Pancreas (tissue), 10 donors: ENCODE measurements at regions of chr7 and their contacts with region 1.

Region 1: DNA sequence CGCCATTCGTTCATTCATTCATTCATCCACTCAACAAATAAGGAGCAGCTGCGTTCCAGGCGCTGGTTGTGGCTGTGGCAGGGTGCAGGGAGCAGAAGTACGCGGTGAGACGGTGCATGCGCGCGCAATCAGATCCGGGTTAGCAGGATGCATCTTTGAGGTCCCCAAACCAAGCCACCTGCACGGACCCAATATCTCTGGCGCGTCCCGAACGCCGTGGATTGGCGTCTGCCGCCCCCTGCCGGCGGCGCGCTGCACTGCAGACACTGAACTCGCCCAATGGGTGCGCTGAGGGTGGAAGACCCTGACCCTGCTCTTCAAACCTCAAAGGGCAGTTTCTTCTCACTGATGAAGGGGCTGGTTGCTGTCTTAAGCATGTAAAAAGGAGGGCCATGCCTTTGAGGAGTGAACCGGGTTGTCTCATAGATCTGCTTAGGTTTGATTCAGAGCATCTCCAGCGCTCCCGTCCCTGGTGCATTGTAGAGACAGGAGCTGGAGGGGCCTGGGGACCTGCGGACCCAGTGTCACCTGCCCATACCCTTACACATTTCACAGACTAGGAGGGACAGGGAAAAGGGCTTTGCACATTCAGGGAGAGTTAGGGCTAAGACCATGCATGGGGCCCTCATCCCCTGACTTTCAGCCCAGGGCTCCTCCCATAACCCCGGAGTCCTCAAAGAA is 102.5 kb downstream of the RAMP3 start:
- DNase-seq: peak in 3 of 6 donors; percentile 40 to 88 (median 50)
- ATAC-seq: peak in 3 of 4 donors; percentile 72 to 86 (median 82)
- H3K4me3 ChIP-seq: no peak overlapping the region
- H3K27ac ChIP-seq: no peak overlapping the region
- H3K4me1 ChIP-seq: no peaks in the 10 kb centered on the region
- H3K27me3 ChIP-seq: no peaks in the 10 kb centered on the region
- CTCF ChIP-seq: peak; percentile 74 to 96 (median 86)

Region 2: DNA sequence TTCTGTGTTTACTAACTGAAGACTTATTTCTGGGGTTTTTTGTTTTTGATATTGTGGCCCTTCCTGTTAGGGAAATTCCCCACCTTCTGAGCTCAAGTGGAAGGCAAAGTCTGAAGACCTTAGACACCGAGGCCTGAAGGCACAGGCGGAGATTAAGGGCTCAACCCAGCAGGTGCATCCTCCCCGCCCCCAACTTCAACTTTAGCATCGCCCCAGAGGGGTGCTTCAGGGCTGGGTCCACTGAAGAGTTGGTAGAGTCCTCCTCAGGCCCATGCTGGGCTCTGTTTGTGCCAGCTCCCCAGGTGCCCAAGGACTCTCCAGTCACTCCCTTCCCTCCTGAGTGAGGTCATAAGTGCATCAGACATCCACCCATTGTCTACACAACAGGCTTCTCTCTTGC is 473.1 kb before region 1 on chr7:
- intact Hi-C with region 1: no loop called
- DNase-seq: peak in 1 of 6 donors; percentile 35
- ATAC-seq: no peak
- H3K4me3 ChIP-seq: no peak overlapping the region
- H3K27ac ChIP-seq: no peak overlapping the region
- H3K4me1 ChIP-seq: peaks cover 0 to 4% (median 0%) of the 10 kb centered on the region in 3 donors
- H3K27me3 ChIP-seq: no peaks in the 10 kb centered on the region
- CTCF ChIP-seq: no peak

Region 3: GRCh38 chr7:45153233-45153632 is 106.9 kb before region 1 on chr7:
- intact Hi-C with region 1: loop called in 2 of 3 experiments (anchors 5 to 10 kb)
- DNase-seq: peak in 1 of 6 donors; percentile 11
- ATAC-seq: no peak
- H3K4me3 ChIP-seq: no peak overlapping the region
- H3K27ac ChIP-seq: no peak overlapping the region
- H3K4me1 ChIP-seq: no peaks in the 10 kb centered on the region
- H3K27me3 ChIP-seq: no peaks in the 10 kb centered on the region
- CTCF ChIP-seq: no peak

Region 4: GRCh38 chr7:45160417-45160881 is 99.7 kb before region 1 on chr7:
- intact Hi-C with region 1: loop called in 2 of 3 experiments (anchors 5 to 10 kb)
- DNase-seq: peak in 1 of 6 donors; percentile 26
- ATAC-seq: no peak
- H3K4me3 ChIP-seq: no peak overlapping the region
- H3K27ac ChIP-seq: no peak overlapping the region
- H3K4me1 ChIP-seq: no peaks in the 10 kb centered on the region
- H3K27me3 ChIP-seq: no peaks in the 10 kb centered on the region
- CTCF ChIP-seq: no peak

Region 5: DNA sequence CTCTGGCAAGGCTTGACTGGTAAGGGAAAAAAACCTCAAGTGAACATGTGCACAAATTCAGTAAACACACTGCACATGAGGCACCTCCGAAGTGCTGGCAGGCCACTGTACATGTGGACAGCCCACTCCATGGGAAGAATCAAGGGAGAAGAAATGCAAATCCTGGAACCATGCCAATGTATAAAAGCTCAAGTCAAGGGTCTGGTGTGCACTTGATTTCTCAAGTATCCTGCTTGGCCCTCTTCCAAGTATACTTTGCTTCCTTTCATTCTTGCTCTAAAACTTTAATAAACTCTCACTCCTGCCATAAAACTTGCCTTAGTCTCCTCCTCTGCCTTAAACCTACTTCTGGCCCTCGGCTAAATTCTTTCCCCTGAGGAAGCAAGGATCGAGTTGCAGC is 64.7 kb after region 1 on chr7:
- intact Hi-C with region 1: no loop called
- DNase-seq: no peak
- ATAC-seq: no peak
- H3K4me3 ChIP-seq: no peak overlapping the region
- H3K27ac ChIP-seq: no peak overlapping the region
- H3K4me1 ChIP-seq: no peaks in the 10 kb centered on the region
- H3K27me3 ChIP-seq: no peaks in the 10 kb centered on the region
- CTCF ChIP-seq: no peak